ENCODE measurements at regions of chr3 and their contacts with region 1.

Region 1: GRCh38 chr3:192566706-192567290 is 160.5 kb downstream of the FGF12 start:
- DNase-seq: peak; percentile 60
- ATAC-seq: peak; percentile 93
- H3K4me3 ChIP-seq: no peak overlapping the region
- H3K27ac ChIP-seq: no peak overlapping the region
- H3K4me1 ChIP-seq: no peaks in the 10 kb centered on the region
- H3K27me3 ChIP-seq: peaks cover 20% of the 10 kb centered on the region
- CTCF ChIP-seq: peak; percentile 48 to 96 (median 61)
- POLR2A ChIP-seq: no peak
- RAD21 ChIP-seq: peak; percentile 91

Region 2: DNA sequence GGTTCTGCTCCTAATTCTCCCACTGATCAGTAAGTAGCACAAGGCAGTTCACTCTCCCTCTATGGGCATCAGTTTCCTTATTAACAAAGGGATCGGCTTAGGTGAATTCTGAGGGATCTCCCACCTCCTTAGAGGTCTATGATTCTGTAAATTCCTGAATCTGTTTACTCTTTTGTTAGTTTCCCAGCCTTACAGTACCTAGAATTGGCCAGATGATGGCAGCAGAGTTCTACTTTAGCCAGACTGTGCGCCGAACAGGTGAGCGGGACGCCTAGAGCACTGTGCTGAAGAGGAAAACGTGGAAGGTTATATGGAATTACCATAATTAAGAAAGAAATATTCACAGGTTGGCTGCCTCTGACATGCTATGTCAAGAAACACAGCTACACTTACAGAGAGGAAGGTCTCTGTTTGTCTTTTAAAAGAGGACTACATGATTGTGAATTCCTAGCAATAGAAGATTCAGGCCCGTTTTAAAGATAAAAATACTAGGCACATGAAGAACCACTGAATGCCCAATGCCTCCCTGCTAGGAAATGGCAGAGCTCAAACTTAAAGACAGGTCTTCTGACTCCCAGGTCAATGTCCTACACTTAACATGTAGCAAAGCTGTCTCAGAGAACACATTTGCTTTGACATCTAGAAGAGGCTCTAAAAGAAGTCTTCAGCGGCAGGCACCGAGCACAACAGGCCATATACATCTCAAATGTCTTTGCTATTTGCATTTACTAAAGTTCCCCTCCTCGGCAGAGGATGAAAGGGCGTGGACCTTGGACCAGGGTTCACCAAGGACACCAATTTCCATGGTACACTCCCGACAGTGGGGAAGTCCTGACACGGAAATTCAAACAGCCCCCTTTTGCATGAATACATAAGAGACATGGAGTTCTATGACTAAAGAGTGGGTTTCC is 99.3 kb before region 1 on chr3:
- CTCF ChIA-PET with region 1: no interaction called
- POLR2A ChIA-PET with region 1: no interaction called
- RAD21 ChIA-PET with region 1: no interaction called
- intact Hi-C with region 1: loop called (anchors 2 kb)
- DNase-seq: peak; percentile 37
- ATAC-seq: peak; percentile 97
- H3K4me3 ChIP-seq: no peak overlapping the region
- H3K27ac ChIP-seq: no peak overlapping the region
- H3K4me1 ChIP-seq: no peaks in the 10 kb centered on the region
- H3K27me3 ChIP-seq: peaks cover 56% of the 10 kb centered on the region
- CTCF ChIP-seq: peak; percentile 61 to 94 (median 81)
- POLR2A ChIP-seq: no peak
- RAD21 ChIP-seq: peak; percentile 86

Region 3: DNA sequence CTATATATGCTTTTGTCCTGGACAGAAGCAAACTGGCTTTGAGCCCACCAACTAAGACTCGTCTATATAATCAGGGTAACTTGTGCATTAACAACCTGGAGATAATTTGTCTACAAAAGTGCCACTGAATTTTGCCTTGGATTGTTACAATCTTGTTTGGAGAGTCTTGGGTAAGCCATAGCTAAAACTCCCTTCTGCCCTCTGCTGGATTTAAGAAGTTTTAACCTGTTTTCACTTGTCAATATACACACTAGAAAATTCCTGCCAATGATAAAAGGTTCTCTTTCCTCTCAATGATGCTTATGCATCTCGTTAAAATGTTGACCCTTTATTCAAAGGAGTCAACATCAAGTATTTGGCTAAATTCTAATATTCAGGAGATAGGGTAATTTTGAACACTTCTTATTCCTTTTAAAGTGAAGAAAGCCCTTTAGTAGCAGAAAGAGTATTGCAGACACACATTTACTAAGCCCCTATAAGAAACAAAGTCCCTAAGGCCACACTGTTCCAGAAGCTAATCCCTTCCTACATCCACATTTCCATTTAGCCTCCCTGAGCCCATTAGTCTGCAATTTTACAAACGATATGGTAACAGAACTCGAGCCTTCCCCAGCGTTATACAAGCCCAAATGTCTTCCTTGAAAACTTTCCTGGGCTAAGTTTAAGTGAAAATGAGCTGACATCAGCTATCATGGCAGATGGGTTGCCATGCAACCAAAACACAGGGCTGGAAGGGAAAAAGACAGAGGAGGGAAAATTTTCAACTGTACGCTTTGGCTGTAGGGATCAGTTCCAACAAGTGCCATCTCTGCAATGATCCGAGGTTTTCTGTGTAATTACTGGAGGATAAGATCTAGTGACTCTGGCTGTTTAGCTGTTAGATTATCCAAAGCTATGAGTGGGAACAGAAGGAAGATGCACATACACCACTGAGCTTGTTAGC is 236.4 kb after region 1 on chr3:
- CTCF ChIA-PET with region 1: interaction called, 7 read pairs
- POLR2A ChIA-PET with region 1: no interaction called
- RAD21 ChIA-PET with region 1: no interaction called
- intact Hi-C with region 1: loop called (anchors 1 kb)
- DNase-seq: peak; percentile 38
- ATAC-seq: peak; percentile 82
- H3K4me3 ChIP-seq: no peak overlapping the region
- H3K27ac ChIP-seq: no peak overlapping the region
- H3K4me1 ChIP-seq: no peaks in the 10 kb centered on the region
- H3K27me3 ChIP-seq: no peaks in the 10 kb centered on the region
- CTCF ChIP-seq: peak; percentile 52 to 68 (median 56)
- POLR2A ChIP-seq: no peak
- RAD21 ChIP-seq: peak; percentile 54

Region 4: DNA sequence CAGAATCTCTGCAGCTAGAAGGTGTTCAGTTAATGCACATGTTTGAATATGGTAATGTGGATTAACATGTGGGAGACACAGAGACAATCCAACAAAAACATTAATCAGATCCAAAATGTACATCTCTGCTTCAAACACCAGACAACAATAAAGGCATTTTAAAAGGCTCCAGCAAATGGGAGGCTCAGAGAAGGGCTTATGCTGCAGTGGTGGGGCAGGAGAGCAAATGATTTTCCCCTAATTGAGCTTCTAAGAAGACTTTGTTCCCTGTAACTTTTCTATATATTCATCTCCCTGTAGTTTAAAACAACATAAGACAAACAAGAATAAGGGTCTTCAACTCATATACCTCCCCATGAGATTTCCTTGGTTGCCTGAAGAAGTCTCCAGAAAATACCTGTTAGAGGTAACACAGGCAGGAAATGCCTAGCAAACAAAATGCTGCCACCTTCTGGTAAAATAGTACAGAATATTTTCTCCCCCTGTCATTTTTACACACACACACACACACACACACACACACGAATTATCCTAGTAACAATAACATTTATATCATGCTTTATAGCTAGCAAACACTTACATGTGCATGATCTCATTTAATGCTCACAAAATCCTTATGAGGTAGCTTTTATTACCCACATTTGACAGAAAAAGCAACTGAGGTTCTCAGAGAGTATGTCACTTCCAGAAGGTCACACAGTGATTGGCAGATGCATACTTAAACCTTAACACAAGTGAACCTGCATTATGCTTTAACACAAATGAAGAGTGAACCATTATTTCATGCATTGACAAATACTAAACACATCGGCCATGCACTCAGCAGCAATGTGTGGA is 474.3 kb after region 1 on chr3:
- CTCF ChIA-PET with region 1: no interaction called
- POLR2A ChIA-PET with region 1: no interaction called
- RAD21 ChIA-PET with region 1: no interaction called
- intact Hi-C with region 1: loop called (anchors 2 kb)
- DNase-seq: peak; percentile 50
- ATAC-seq: peak; percentile 83
- H3K4me3 ChIP-seq: no peak overlapping the region
- H3K27ac ChIP-seq: no peak overlapping the region
- H3K4me1 ChIP-seq: no peaks in the 10 kb centered on the region
- H3K27me3 ChIP-seq: no peaks in the 10 kb centered on the region
- CTCF ChIP-seq: peak; percentile 38 to 71 (median 65); a peak in 5 of 6 replicates
- POLR2A ChIP-seq: no peak
- RAD21 ChIP-seq: peak; percentile 85

Region 5: GRCh38 chr3:193271101-193271840 is 704.5 kb after region 1 on chr3:
- CTCF ChIA-PET with region 1: no interaction called
- POLR2A ChIA-PET with region 1: no interaction called
- RAD21 ChIA-PET with region 1: no interaction called
- intact Hi-C with region 1: no loop called
- DNase-seq: no peak
- ATAC-seq: no peak
- H3K4me3 ChIP-seq: no peak overlapping the region
- H3K27ac ChIP-seq: no peak overlapping the region
- H3K4me1 ChIP-seq: no peaks in the 10 kb centered on the region
- H3K27me3 ChIP-seq: peaks cover 10% of the 10 kb centered on the region; the same call in 1 of the 2 replicates
- CTCF ChIP-seq: no peak
- POLR2A ChIP-seq: no peak
- RAD21 ChIP-seq: no peak

Region 6: GRCh38 chr3:193452338-193452737 is 885.5 kb after region 1 on chr3:
- CTCF ChIA-PET with region 1: no interaction called
- POLR2A ChIA-PET with region 1: no interaction called
- RAD21 ChIA-PET with region 1: no interaction called
- intact Hi-C with region 1: loop called (anchors 10 kb)
- DNase-seq: no peak
- ATAC-seq: no peak
- H3K4me3 ChIP-seq: no peak overlapping the region
- H3K27ac ChIP-seq: no peak overlapping the region
- H3K4me1 ChIP-seq: no peaks in the 10 kb centered on the region
- H3K27me3 ChIP-seq: peaks cover 21% of the 10 kb centered on the region; the same call in 1 of the 2 replicates
- CTCF ChIP-seq: peak in 2 of 3 experiments; percentile 28 to 40; a peak in 4 of 6 replicates
- POLR2A ChIP-seq: no peak
- RAD21 ChIP-seq: peak; percentile 35

Measured in HCT116 (cell line).